Psoas muscle (tissue), 8 donors: ENCODE measurements at regions of chr14 and their contacts with region 1.

Region 1: DNA sequence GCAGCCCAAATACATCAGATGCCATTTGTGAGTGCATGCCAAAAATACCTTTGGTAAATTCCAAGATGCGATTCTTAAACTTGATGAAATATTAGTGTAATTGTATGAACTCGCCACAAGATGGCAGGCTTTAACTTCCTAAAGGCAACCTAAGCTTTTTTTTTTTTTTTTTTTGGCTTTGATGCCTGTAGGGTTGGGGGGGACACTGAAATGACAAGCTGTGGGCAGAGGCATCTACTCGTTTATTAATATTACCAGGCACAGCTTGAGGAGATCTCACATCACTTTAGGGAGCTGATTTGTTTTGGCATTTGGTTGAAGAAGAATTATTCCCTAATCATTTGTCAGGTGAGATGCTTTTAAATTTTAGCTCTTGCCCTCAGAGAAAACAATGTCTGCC is 126.7 kb upstream of the CCDC196 start:
- DNase-seq: no peak
- ATAC-seq: peak in 1 of 4 donors; percentile 44
- H3K4me3 ChIP-seq: no peak overlapping the region
- H3K27ac ChIP-seq: no peak overlapping the region
- H3K4me1 ChIP-seq: no peaks in the 10 kb centered on the region
- H3K27me3 ChIP-seq: no peaks in the 10 kb centered on the region
- CTCF ChIP-seq: peak; percentile 71

Region 2: GRCh38 chr14:66206554-66206953 is 152.9 kb before region 1 on chr14:
- intact Hi-C with region 1: no loop called
- DNase-seq: no peak
- ATAC-seq: no peak
- H3K4me3 ChIP-seq: no peak overlapping the region
- H3K27ac ChIP-seq: no peak overlapping the region
- H3K4me1 ChIP-seq: no peaks in the 10 kb centered on the region
- H3K27me3 ChIP-seq: no peaks in the 10 kb centered on the region
- CTCF ChIP-seq: no peak

Region 3: GRCh38 chr14:66403183-66403582 is 43.7 kb after region 1 on chr14:
- intact Hi-C with region 1: loop called in 1 of 2 experiments (anchors 2 kb)
- DNase-seq: no peak
- ATAC-seq: peak in 2 of 4 donors; percentile 64 to 74
- H3K4me3 ChIP-seq: no peak overlapping the region
- H3K27ac ChIP-seq: no peak overlapping the region
- H3K4me1 ChIP-seq: no peaks in the 10 kb centered on the region
- H3K27me3 ChIP-seq: no peaks in the 10 kb centered on the region
- CTCF ChIP-seq: peak; percentile 35

Region 4: GRCh38 chr14:66490143-66491056 is 130.9 kb after region 1 on chr14:
- intact Hi-C with region 1: loop called in 1 of 2 experiments (anchors 5 kb)
- DNase-seq: no peak
- ATAC-seq: no peak
- H3K4me3 ChIP-seq: no peak overlapping the region
- H3K27ac ChIP-seq: no peak overlapping the region
- H3K4me1 ChIP-seq: no peaks in the 10 kb centered on the region
- H3K27me3 ChIP-seq: no peaks in the 10 kb centered on the region
- CTCF ChIP-seq: no peak